CD4-positive, alpha-beta memory T cell (primary cell): ENCODE measurements at regions of chr15 and their contacts with region 1.

Region 1: DNA sequence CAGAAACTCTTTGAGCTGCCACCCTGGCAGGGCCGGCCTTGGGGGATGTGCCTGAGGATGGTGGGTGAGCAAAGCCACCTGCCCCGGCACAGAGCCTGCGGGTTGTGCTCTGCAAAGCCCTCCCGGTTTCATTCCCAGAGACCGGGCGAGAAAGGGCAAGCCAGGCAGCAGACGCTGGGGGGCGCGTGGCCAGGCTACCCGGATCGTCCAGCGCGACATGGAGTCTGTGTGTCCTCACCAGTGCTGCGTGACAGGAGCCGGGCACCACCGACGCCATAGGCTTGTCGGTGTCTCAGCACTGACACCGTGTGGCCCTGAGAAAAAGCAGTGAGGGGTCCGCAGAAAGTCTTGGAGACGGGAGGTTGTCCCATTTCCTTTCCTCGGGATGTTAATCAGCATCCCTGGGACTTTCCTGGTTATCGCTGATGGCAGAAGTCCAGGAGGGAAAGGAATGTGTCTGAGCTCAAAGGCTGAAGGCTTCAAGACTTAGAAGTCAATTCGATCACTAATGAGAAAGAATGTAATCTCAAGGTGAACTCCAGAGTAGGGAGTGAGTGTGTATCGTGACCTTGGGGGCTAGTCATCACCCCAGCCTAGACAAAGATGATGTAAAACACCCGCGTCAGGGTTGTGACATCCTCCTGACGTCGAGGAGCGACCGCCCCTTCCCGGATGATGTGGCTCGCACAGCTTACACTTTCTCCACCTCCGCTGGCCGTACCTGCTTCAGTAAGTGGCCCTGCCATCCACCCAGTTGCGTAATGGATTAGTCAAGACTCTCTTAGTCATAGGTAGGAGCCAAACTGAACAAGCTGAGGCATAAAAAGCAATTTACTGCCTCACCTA is 36.3 kb upstream of the PLA2G4E start:
- DNase-seq: peak; percentile 22 to 83 (median 58)
- H3K4me3 ChIP-seq: peak overlapping the region in 1 of 2 donors; percentile 11
- H3K4me3 Mint-ChIP-seq: peak overlapping the region; percentile 18 to 68 (median 62)
- H3K27ac ChIP-seq: no peak overlapping the region
- H3K27ac Mint-ChIP-seq: peak overlapping the region; percentile 68 to 91 (median 79)
- H3K4me1 ChIP-seq: peaks cover 13% of the 10 kb centered on the region
- H3K4me1 Mint-ChIP-seq: peaks cover 2 to 26% (median 8%) of the 10 kb centered on the region in 4 donors
- H3K27me3 ChIP-seq: no peaks in the 10 kb centered on the region
- H3K27me3 Mint-ChIP-seq: peaks cover 14 to 20% of the 10 kb centered on the region in 2 donors

Region 2: DNA sequence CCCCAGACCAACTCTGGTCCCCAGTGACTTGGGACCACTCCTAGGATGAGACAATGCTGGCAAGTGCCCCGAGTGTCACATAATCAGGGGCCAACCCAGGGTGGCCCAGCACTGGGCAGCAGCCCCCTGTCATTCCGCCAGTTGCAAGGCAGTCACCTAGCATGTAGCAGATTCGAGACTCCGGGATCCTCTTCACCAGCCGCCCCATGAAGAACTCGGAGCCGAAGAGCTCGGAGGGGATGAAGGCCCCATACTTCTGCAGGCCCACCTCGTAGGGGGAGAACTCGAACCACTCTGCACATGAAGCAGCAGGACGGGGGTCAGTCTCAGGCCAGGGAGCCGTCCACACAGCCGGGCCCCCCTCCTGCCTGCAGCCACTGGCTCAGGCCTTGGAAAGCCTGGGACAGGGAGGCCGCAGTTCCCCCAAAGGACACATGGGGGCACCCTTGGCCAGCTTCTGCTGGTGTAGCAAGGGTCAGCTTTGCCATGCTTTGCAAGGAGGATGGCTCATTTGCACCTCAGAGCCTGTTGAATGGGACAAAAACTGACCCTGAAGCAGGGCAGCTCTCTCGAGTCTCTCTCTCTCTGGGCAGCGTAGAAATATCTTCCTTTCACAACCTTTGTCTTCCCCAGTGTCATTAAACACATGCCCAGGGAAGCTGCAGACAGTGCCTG is 67.8 kb before region 1 on chr15:
- CTCF ChIA-PET with region 1: interaction called, 21 read pairs
- POLR2A ChIA-PET with region 1: interaction called, 4 read pairs
- intact Hi-C with region 1: loop called (anchors 1 kb)
- DNase-seq: peak; percentile 70 to 78 (median 72)
- H3K4me3 ChIP-seq: no peak overlapping the region
- H3K4me3 Mint-ChIP-seq: no peak overlapping the region
- H3K27ac ChIP-seq: no peak overlapping the region
- H3K27ac Mint-ChIP-seq: peak overlapping the region in 1 of 7 donors; percentile 52
- H3K4me1 ChIP-seq: no peaks in the 10 kb centered on the region
- H3K4me1 Mint-ChIP-seq: no peaks in the 10 kb centered on the region
- H3K27me3 ChIP-seq: no peaks in the 10 kb centered on the region
- H3K27me3 Mint-ChIP-seq: no peaks in the 10 kb centered on the region

Region 3: GRCh38 chr15:42072141-42072685 is 15.1 kb after region 1 on chr15:
- CTCF ChIA-PET with region 1: interaction called, 14 read pairs
- POLR2A ChIA-PET with region 1: no interaction called
- intact Hi-C with region 1: no loop called
- DNase-seq: no peak
- H3K4me3 ChIP-seq: no peak overlapping the region
- H3K4me3 Mint-ChIP-seq: no peak overlapping the region
- H3K27ac ChIP-seq: no peak overlapping the region
- H3K27ac Mint-ChIP-seq: no peak overlapping the region
- H3K4me1 ChIP-seq: no peaks in the 10 kb centered on the region
- H3K4me1 Mint-ChIP-seq: no peaks in the 10 kb centered on the region
- H3K27me3 ChIP-seq: no peaks in the 10 kb centered on the region
- H3K27me3 Mint-ChIP-seq: peaks cover 3 to 7% of the 10 kb centered on the region in 2 donors